ENCODE measurements at regions of chr6 and their contacts with region 1.

Region 1: GRCh38 chr6:136226027-136226673 is 24.0 kb downstream of the MTFR2 start:
- DNase-seq: peak in 4 of 5 donors; percentile 39 to 63 (median 50)
- ATAC-seq: peak; percentile 73 to 91 (median 79)
- H3K4me3 ChIP-seq: peak overlapping the region in 9 of 12 donors; percentile 16 to 49 (median 27)
- H3K27ac ChIP-seq: peak overlapping the region in 6 of 12 donors; percentile 3 to 39 (median 17)
- H3K4me1 ChIP-seq: peaks cover 0 to 34% (median 2%) of the 10 kb centered on the region in 12 donors
- H3K27me3 ChIP-seq: no peaks in the 10 kb centered on the region
- CTCF ChIP-seq: peak; percentile 99 to 100 (median 100)
- POLR2A ChIP-seq: no peak

Region 2: GRCh38 chr6:135451693-135452092 is 774.5 kb before region 1 on chr6:
- intact Hi-C with region 1: loop called in 2 of 10 experiments (anchors 5 kb)
- DNase-seq: no peak
- ATAC-seq: no peak
- H3K4me3 ChIP-seq: no peak overlapping the region
- H3K27ac ChIP-seq: no peak overlapping the region
- H3K4me1 ChIP-seq: no peaks in the 10 kb centered on the region
- H3K27me3 ChIP-seq: no peaks in the 10 kb centered on the region
- CTCF ChIP-seq: peak; percentile 57 to 80 (median 68)
- POLR2A ChIP-seq: no peak

Region 3: DNA sequence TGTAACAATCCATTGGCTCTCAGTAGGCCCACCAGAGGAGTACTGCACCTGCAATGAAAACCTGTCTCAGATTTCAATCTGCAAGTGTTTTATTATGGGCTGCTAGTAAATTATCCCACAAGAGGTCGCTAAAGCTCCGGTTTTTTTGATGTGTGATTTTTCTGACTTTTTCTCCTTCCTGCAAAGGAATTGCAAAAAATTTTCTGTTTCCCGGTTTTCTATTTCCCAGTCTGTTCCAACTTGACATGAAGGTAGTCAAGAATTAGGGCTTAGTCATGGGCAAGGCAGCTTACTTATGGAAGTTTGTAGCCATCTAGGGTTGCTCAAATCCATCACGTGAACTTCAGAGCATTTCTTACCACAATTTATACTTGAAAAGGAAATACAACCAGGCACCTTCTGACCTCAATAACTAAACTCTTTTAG is 690.1 kb before region 1 on chr6:
- intact Hi-C with region 1: loop called (anchors 1 to 5 kb)
- DNase-seq: no peak
- ATAC-seq: peak in 1 of 4 donors; percentile 48
- H3K4me3 ChIP-seq: no peak overlapping the region
- H3K27ac ChIP-seq: no peak overlapping the region
- H3K4me1 ChIP-seq: peaks cover 0 to 6% (median 0%) of the 10 kb centered on the region in 12 donors
- H3K27me3 ChIP-seq: no peaks in the 10 kb centered on the region
- CTCF ChIP-seq: peak; percentile 49 to 82 (median 72)
- POLR2A ChIP-seq: no peak

Region 4: DNA sequence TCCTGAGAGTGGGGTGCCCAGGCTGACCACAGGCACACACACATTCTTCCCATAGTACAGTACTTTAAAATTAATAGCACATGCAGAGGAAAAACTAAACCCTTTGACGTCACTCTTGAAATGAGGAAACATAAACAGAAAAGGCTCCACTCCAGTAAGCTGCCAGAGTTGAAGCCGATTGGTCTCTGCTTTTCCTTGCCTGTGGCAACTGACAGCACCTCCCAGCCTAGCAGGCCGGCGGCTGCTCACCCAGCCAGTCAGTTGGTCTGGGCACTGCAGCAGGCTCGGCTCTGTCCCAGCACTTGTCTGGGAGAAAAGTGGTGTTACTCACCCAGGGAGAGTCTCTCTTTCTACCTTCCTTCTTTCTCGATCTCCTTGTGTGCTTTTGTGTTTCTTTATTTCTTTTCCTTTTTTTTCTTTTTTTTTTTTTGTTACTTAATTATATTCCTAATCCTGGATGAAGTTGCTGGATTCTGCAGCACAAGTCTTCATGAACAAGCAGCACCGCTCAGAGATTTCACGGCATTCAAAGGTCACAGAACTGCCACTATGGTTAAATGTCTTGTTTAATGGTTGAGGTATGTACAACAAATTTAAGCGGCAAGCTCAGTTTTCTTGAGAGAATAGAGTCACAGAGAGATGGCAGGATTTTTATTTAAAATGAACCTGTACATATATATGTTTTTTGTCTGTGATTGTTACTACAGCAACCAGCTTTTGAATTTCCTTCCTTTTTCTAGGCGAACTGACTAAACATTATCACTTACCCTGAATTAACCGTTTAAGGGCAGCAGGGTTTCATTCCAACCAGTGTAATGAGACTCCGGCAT is 374.5 kb before region 1 on chr6 and contains the start of gene PDE7B:
- intact Hi-C with region 1: loop called in 1 of 10 experiments (anchors 5 kb)
- DNase-seq: peak; percentile 79 to 89 (median 85)
- ATAC-seq: peak; percentile 89 to 98 (median 96)
- H3K4me3 ChIP-seq: peak within 1 kb of the TSS; percentile 3 to 62 (median 52)
- H3K27ac ChIP-seq: peak within 1 kb of the TSS; percentile 25 to 84 (median 64)
- H3K4me1 ChIP-seq: peaks cover 0 to 28% (median 10%) of the 10 kb centered on the region in 12 donors
- H3K27me3 ChIP-seq: no peaks in the 10 kb centered on the region
- CTCF ChIP-seq: no peak
- POLR2A ChIP-seq: peak in 1 of 2 donors; percentile 80
- total RNA-seq, gene PDE7B: 4.8 to 29.1 (median 12.0) TPM

Region 5: DNA sequence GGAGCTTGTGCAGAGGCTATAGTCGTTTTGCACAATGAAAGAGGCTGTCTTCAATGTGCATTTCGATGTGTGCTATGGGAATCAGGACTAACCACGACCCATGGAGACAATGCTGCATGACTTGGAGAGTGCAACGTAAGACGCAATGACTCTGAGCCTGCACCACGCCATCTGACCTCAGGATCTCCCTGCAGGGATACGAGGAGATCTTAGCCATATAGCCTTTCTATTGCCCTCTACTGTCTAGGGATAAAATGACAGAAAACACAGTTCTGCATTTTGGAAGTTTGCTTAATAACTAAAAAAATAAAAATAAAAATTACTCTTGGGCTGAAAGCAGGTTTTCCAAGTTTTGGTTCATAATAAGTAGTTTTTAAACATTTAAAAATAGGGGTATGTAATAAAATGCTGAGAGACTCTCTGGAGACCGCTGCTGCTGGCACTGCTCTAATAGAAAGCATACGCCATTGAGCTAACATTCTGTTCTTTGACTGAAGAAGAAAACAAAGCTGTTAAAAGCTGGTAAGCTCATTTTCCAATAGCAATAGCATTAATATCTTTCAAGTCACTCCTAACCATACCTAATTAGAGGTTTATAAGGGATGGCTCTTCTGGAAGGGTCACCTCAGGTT is 287.5 kb before region 1 on chr6:
- intact Hi-C with region 1: loop called in 2 of 10 experiments (anchors 10 kb)
- DNase-seq: peak in 4 of 5 donors; percentile 24 to 57 (median 36)
- ATAC-seq: peak; percentile 48 to 84 (median 72)
- H3K4me3 ChIP-seq: peak overlapping the region in 6 of 12 donors; percentile 22 to 44 (median 30)
- H3K27ac ChIP-seq: peak overlapping the region; percentile 39 to 90 (median 71)
- H3K4me1 ChIP-seq: peaks cover 0 to 15% (median 0%) of the 10 kb centered on the region in 12 donors
- H3K27me3 ChIP-seq: no peaks in the 10 kb centered on the region
- CTCF ChIP-seq: peak in 11 of 12 donors; percentile 22 to 60 (median 40)
- POLR2A ChIP-seq: no peak

Region 6: DNA sequence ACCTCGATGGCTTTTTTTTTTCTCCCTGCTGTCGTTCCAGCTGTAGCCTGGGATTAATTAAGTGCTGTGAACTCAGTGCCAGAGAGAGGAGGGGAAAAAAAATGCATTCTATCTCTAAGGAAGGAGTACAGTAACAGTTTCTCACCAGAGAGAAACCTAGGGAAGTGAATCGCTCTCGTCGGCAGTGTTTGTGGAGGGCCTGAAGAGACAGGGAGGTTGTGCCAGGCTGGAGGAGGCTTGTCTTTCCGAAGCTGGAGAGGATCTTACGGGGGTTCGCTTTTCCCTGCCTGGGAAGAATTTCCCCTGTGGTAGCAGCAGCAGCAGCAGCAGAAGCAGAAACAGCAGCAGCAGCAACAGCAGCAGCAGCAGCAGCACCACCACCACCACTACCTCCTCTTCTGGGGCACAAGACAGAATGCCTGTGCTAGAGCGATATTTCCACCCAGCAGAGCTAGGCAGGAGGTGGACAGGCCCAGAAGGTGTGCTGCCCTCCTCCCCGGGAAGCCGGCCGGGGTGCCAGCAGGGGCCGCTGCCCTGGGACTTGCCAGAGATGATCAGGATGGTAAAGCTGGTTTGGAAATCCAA is 188.2 kb before region 1 on chr6:
- intact Hi-C with region 1: loop called in 8 of 10 experiments (anchors 2 to 10 kb)
- DNase-seq: peak; percentile 26 to 73 (median 48)
- ATAC-seq: peak; percentile 44 to 59 (median 54)
- H3K4me3 ChIP-seq: peak overlapping the region; percentile 6 to 63 (median 55)
- H3K27ac ChIP-seq: peak overlapping the region; percentile 73 to 91 (median 84)
- H3K4me1 ChIP-seq: peaks cover 0 to 75% (median 37%) of the 10 kb centered on the region in 12 donors
- H3K27me3 ChIP-seq: no peaks in the 10 kb centered on the region
- CTCF ChIP-seq: peak in 9 of 12 donors; percentile 11 to 51 (median 35)
- POLR2A ChIP-seq: no peak